ENCODE measurements at regions of chr4 and their contacts with region 1.

Region 1: GRCh38 chr4:158850800-158851644 is 82.2 kb downstream of the FNIP2 start:
- DNase-seq: peak; percentile 35
- H3K4me3 Mint-ChIP-seq: no peak overlapping the region
- H3K27ac Mint-ChIP-seq: no peak overlapping the region
- H3K4me1 Mint-ChIP-seq: no peaks in the 10 kb centered on the region
- H3K27me3 Mint-ChIP-seq: no peaks in the 10 kb centered on the region
- CTCF ChIP-seq: peak; percentile 58

Region 2: DNA sequence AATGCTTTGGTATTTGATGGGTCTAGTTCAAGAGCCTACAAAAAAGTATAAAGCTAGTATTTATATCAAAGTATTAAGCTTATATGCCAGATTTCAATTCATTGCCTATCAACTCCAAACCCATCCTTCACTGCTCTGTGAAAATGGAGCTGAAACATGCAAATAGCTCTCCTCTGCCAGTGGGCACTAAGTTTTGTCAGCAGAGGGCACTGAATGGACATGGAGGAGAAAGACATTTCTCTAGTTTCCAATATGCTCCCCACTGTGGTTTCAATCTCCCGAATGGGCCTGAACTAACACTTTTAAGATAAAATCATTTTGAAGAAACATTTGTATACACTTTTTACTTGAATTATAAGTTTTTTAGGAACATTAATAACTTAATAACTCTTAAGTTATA is 140.2 kb before region 1 on chr4:
- CTCF ChIA-PET with region 1: interaction called, 15 read pairs
- POLR2A ChIA-PET with region 1: interaction called, 3 read pairs
- intact Hi-C with region 1: no loop called
- DNase-seq: no peak
- H3K4me3 Mint-ChIP-seq: no peak overlapping the region
- H3K27ac Mint-ChIP-seq: no peak overlapping the region
- H3K4me1 Mint-ChIP-seq: no peaks in the 10 kb centered on the region
- H3K27me3 Mint-ChIP-seq: no peaks in the 10 kb centered on the region
- CTCF ChIP-seq: no peak

Region 3: DNA sequence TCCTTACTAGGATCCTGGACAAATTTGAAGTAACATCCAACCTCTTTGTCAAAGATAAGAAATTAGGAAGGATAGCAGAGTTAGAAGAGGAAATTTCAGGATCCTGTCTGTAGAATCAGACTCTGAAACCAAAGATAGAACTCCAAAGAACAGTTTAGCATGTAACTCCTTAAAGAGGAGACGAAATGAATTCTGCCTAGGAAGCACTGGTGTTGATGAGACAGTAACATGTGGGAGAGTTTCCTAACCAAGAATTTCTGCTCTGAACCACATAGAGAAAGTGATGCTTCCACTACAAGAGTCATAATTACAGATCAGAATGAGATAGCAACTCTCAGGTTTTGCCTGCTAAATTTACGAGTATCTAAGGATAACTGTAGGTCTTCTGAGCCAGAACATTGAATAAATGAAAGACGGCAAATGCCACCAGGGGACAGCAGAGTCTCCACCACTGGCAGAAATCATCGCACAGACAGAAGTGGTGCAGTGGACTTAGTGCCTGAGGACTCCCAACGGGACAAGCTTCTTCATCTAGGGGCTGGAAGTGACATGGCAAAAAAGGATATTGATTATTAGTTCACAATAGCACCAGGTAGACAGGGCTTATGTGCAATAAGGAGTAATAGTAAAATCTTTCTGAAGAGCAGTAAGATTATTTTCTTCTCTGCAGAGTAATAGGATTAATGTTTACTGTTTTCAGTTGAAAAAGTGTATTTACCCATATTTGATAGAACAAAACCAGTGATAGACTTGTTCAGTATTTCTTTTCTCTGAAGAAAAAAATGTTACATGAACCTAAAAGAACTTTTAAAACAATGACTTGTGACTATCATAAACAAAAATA is 121.1 kb before region 1 on chr4:
- CTCF ChIA-PET with region 1: interaction called, 34 read pairs
- POLR2A ChIA-PET with region 1: interaction called, 3 read pairs
- intact Hi-C with region 1: loop called (anchors 1 kb)
- DNase-seq: peak; percentile 69
- H3K4me3 Mint-ChIP-seq: no peak overlapping the region
- H3K27ac Mint-ChIP-seq: no peak overlapping the region
- H3K4me1 Mint-ChIP-seq: no peaks in the 10 kb centered on the region
- H3K27me3 Mint-ChIP-seq: peaks cover 55% of the 10 kb centered on the region
- CTCF ChIP-seq: peak; percentile 75

Region 4: DNA sequence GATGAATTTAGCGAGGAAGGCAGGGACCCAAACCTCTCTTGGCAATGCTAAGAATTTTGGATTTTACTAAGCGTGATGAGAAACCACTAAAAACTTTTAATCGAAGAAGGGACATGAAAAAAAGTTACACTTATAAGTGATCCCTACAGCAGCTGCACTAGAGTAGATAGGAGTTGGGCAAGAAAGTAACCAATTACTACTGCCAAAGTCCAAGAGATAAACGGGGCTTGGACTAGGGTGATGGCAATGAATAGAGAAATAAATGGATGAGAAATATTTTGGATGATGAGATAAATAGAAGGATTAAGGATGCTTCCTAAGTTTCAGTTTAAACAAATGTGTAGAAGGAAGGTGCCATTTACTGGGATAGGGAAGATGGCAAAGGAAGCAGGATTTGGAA is 88.5 kb before region 1 on chr4:
- CTCF ChIA-PET with region 1: no interaction called
- POLR2A ChIA-PET with region 1: no interaction called
- intact Hi-C with region 1: no loop called
- DNase-seq: no peak
- H3K4me3 Mint-ChIP-seq: no peak overlapping the region
- H3K27ac Mint-ChIP-seq: no peak overlapping the region
- H3K4me1 Mint-ChIP-seq: no peaks in the 10 kb centered on the region
- H3K27me3 Mint-ChIP-seq: no peaks in the 10 kb centered on the region
- CTCF ChIP-seq: no peak

Region 5: DNA sequence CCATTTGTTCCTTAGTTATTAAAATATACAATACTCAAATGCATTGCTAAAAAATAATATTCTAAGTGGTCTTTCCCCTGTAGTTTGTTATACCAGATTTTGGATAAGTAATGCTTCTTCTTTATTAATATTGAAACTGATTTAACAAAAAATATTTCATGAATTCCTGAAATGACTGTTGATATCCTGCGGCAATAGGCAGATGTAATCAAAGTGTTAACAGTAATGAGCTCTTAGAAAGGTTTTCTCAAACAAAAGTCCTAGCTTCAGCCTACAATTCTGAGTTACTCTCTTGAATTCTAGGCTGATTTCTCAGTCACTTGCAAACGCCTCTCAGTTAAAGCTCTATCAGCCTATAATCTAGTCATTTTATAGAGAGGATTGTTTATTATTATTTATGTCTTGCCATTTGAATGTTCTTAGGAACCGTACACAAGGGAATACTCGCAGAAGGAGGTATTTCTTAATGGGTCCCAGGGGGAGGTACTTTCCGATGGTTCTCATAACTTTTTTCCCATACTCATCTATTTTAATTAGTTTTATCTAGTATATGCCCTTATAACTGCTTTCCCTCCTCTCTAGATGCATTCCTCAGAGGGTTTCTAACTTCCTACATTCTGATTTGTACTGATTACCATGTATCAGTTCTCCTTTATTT is 14.6 kb after region 1 on chr4:
- CTCF ChIA-PET with region 1: interaction called, 12 read pairs
- POLR2A ChIA-PET with region 1: no interaction called
- intact Hi-C with region 1: no loop called
- DNase-seq: no peak
- H3K4me3 Mint-ChIP-seq: no peak overlapping the region
- H3K27ac Mint-ChIP-seq: no peak overlapping the region
- H3K4me1 Mint-ChIP-seq: no peaks in the 10 kb centered on the region
- H3K27me3 Mint-ChIP-seq: no peaks in the 10 kb centered on the region
- CTCF ChIP-seq: no peak

Region 6: DNA sequence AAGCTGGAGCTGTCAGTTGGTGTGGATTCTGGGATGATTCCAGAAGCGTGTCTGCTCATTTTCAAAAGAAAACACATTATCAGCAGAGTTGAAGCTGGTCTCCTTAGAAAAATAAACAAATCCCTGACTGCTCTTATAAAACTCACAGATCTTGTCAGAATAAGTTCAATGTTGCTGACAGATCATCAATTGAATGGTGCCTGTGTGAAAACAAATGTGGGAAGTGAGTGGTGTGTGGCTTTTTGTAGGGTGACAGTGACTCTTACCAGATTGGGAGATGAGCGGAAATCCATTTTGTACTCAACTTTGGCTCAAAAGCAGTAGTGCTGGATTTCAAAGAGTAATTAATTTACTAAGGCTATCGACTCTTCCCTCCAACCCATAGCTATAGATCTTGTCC is 1059.7 kb after region 1 on chr4:
- CTCF ChIA-PET with region 1: no interaction called
- POLR2A ChIA-PET with region 1: no interaction called
- intact Hi-C with region 1: no loop called
- DNase-seq: no peak
- H3K4me3 Mint-ChIP-seq: no peak overlapping the region
- H3K27ac Mint-ChIP-seq: no peak overlapping the region
- H3K4me1 Mint-ChIP-seq: no peaks in the 10 kb centered on the region
- H3K27me3 Mint-ChIP-seq: no peaks in the 10 kb centered on the region
- CTCF ChIP-seq: no peak